Heart right ventricle (tissue), 16 donors: ENCODE measurements at regions of chr11 and their contacts with region 1.

Region 1: GRCh38 chr11:119666463-119667131 is 62.4 kb downstream of the NECTIN1 start:
- DNase-seq: peak; percentile 77 to 84
- ATAC-seq: peak; percentile 90 to 95 (median 92)
- H3K4me3 ChIP-seq: no peak overlapping the region
- H3K27ac ChIP-seq: no peak overlapping the region
- H3K4me1 ChIP-seq: peaks cover 0 to 28% (median 22%) of the 10 kb centered on the region in 9 donors
- H3K27me3 ChIP-seq: no peaks in the 10 kb centered on the region
- CTCF ChIP-seq: peak; percentile 94 to 98 (median 96)

Region 2: GRCh38 chr11:119323538-119324033 is 343.0 kb before region 1 on chr11:
- intact Hi-C with region 1: no loop called
- DNase-seq: peak in 1 of 2 donors; percentile 83
- ATAC-seq: no peak
- H3K4me3 ChIP-seq: no peak overlapping the region
- H3K27ac ChIP-seq: peak overlapping the region in 5 of 10 donors; percentile 6 to 99 (median 92)
- H3K4me1 ChIP-seq: peaks cover 4 to 55% (median 34%) of the 10 kb centered on the region in 9 donors
- H3K27me3 ChIP-seq: peaks cover 0 to 27% (median 0%) of the 10 kb centered on the region in 7 donors
- CTCF ChIP-seq: peak; percentile 68 to 87 (median 84)

Region 3: GRCh38 chr11:119721129-119722120 is 54.8 kb after region 1 on chr11:
- intact Hi-C with region 1: loop called in 4 of 10 experiments (anchors 5 kb)
- DNase-seq: peak; percentile 56 to 64
- ATAC-seq: peak; percentile 62 to 89 (median 72)
- H3K4me3 ChIP-seq: no peak overlapping the region
- H3K27ac ChIP-seq: no peak overlapping the region
- H3K4me1 ChIP-seq: peaks cover 0 to 21% (median 8%) of the 10 kb centered on the region in 9 donors
- H3K27me3 ChIP-seq: no peaks in the 10 kb centered on the region
- CTCF ChIP-seq: peak; percentile 16 to 66 (median 54)

Region 4: DNA sequence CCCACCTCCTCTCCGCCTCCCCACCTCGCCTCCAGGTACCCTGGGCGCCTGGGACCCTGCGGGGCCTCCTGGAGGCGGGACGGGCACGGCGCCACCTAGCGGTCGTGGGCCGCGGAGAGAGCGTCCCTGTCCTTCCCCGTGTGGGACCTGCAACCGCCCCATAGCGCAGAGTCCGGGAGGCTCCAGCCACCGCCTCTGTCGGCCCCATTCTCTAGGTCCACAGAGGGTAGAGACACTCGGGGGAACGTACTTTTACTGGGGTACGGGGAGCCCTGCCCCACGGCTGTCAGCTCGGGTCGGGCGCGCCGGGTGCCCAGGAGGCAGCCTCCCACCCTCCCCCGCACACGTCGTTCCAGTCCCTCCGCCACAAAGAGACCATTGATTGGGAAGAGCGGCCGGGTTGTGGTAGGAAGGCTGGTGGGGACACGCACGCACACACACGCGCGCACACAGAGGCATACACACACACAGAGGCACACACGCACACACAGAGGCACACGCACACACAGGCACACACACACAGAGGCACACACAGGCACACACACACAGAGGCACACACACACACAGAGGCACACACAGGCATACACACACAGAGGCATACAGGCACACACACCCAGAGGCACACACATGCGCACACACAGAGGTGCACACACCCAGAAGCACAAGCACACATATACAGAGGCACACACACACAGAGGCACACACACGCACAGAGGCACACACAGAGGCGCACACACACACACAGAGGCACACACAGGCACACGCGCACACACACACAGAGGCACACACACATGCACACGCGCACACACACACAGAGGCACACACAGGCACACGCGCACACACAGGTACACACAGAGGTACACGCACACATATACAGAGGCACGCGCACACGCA is 75.0 kb after region 1 on chr11:
- intact Hi-C with region 1: loop called in 1 of 10 experiments (anchors 5 kb)
- DNase-seq: peak; percentile 45 to 73
- ATAC-seq: peak; percentile 70 to 89 (median 81)
- H3K4me3 ChIP-seq: peak overlapping the region in 6 of 10 donors; percentile 10 to 33 (median 30)
- H3K27ac ChIP-seq: no peak overlapping the region
- H3K4me1 ChIP-seq: peaks cover 0 to 15% (median 7%) of the 10 kb centered on the region in 9 donors
- H3K27me3 ChIP-seq: peaks cover 0 to 51% (median 31%) of the 10 kb centered on the region in 7 donors
- CTCF ChIP-seq: peak; percentile 61 to 90 (median 84)

Region 5: DNA sequence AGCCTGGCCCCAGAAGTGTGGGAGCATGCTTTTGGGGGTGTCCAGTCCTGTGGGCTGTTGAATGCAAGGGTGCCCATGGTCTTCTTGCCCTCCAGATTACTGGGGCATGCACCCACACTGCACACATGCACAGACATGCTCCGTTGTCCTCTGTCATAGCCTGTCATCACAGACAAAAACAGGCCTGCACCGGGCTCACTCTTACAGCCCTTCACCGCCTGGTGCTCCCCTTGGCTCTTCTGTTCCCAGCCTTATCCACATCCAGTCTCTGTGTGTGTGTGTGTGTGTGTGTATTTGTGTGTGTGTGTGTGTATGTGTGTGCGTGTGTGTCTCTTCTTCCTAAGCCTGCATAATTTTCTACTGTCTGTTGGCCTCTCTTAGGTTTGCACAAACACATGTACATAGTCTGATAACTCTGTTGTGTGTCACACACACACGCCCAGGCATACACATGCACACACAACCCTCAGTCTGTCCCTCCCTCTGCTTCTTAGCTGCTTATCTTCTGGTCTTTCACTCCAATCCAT is 85.8 kb after region 1 on chr11:
- intact Hi-C with region 1: no loop called
- DNase-seq: no peak
- ATAC-seq: peak in 3 of 8 donors; percentile 4 to 34 (median 16)
- H3K4me3 ChIP-seq: no peak overlapping the region
- H3K27ac ChIP-seq: no peak overlapping the region
- H3K4me1 ChIP-seq: peaks cover 0 to 20% (median 0%) of the 10 kb centered on the region in 9 donors
- H3K27me3 ChIP-seq: peaks cover 0 to 16% (median 0%) of the 10 kb centered on the region in 7 donors
- CTCF ChIP-seq: no peak

Region 6: DNA sequence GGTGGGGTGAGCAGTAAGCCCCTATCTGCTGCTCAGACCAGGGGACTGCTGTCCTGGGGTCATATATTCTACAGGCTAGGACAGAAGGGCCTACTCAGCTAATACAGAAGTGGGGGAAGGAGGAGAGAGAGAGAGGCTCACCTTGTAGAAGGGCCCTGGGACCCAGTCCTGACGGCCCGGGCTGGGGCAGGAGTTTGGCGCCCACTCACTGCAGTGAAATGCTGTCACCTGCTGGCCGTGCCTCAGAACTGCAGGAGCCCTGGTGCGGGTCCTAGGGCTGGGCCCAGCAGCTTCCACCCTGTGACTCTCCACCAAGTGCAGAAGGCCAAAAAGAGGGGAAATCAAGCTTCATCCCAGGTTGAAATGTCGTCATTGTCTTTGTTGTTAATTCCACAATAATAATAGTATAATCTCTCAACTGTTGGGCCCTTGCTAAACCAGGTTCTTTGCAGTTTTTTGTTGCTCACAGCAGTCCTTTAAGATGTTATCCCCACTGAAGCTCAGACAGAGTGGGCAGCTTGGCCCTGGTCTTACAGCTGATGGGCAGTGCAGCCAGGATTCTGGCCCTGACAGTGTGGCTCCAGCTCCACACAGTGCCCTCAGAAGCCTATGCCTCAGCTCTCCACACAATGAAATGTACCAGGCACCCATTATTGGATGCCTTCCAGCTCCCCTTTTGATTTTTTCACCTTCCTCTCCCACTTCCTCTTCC is 441.7 kb after region 1 on chr11:
- intact Hi-C with region 1: loop called (anchors 1 to 5 kb)
- DNase-seq: peak; percentile 48 to 71
- ATAC-seq: peak; percentile 77 to 94 (median 86)
- H3K4me3 ChIP-seq: no peak overlapping the region
- H3K27ac ChIP-seq: no peak overlapping the region
- H3K4me1 ChIP-seq: no peaks in the 10 kb centered on the region
- H3K27me3 ChIP-seq: peaks cover 0 to 36% (median 13%) of the 10 kb centered on the region in 7 donors
- CTCF ChIP-seq: peak; percentile 94 to 100 (median 99)